PC-3 (cell line): ENCODE measurements at regions of chr6 and their contacts with region 1.

Region 1: DNA sequence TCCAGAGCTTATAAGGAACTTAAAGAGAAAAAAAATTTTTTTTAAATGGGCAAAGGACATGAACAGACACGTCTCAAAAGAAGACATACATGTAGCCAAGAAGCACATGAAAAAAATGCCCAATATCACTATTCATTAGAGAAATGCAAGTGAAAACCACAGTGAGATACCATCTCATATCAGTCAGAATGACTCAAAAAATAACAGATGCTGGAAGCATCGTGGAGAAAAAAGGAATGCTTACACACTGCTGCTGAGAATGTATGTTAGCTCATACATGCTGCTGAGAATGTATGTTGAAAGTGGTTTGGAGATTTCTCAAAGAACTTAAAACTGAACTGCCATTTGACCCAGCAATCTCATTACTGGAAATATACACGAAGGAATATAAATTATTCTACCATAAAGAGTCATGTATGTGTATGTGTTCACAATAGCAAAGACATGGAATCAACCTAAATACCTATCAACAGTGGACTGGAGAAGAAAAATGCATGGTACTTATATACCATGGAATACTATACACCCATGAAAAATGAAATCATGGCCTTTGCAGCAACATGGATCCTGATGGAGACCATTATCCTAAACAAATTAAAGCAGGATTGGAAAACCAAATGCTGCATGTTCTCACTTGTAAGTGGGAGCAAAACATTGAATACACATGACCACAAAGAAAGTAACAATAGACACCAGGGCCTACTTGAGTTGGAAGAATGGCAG is 5.2 kb downstream of the OR11A1 start:
- DNase-seq: no peak
- ATAC-seq: no peak
- H3K4me3 ChIP-seq: no peak overlapping the region
- H3K27ac ChIP-seq: no peak overlapping the region
- H3K4me1 ChIP-seq: no peaks in the 10 kb centered on the region
- H3K27me3 ChIP-seq: peaks cover 28% of the 10 kb centered on the region
- CTCF ChIP-seq: no peak

Region 2: DNA sequence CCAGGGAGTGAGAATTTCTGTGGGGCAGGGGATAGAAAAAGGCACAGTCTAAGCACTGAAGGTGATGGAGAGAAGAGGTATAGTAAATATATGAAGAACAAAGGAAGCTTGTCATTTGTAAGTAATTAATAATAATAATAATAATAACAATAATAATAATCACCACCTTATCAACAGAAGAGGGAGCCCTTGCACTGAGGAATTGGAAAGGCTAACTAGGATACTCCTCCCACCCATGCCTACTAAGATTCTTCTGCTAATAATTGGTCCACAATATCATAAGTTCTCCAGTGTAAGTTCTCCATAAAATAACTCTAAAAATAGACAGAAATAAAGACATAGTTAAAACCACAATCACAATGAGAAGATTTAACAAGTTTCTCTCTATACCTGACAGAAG is 75.6 kb before region 1 on chr6:
- CTCF ChIA-PET with region 1: interaction called, 11 read pairs
- POLR2A ChIA-PET with region 1: no interaction called
- intact Hi-C with region 1: no loop called
- DNase-seq: peak; percentile 54
- ATAC-seq: no peak
- H3K4me3 ChIP-seq: no peak overlapping the region
- H3K27ac ChIP-seq: no peak overlapping the region
- H3K4me1 ChIP-seq: no peaks in the 10 kb centered on the region
- H3K27me3 ChIP-seq: peaks cover 24% of the 10 kb centered on the region
- CTCF ChIP-seq: peak; percentile 34; the same call in 1 of the 2 replicates

Region 3: GRCh38 chr6:29388533-29388932 is 63.1 kb before region 1 on chr6:
- CTCF ChIA-PET with region 1: no interaction called
- POLR2A ChIA-PET with region 1: no interaction called
- intact Hi-C with region 1: no loop called
- DNase-seq: no peak
- ATAC-seq: no peak
- H3K4me3 ChIP-seq: no peak overlapping the region
- H3K27ac ChIP-seq: no peak overlapping the region
- H3K4me1 ChIP-seq: no peaks in the 10 kb centered on the region
- H3K27me3 ChIP-seq: peaks cover 55% of the 10 kb centered on the region
- CTCF ChIP-seq: no peak